ENCODE measurements at regions of chr19 and their contacts with region 1.

Region 1: GRCh38 chr19:43934985-43935708 is at the start of gene ZNF45:
- DNase-seq: peak; percentile 91
- H3K4me3 Mint-ChIP-seq: peak within 1 kb of the TSS; percentile 92
- H3K27ac Mint-ChIP-seq: peak within 1 kb of the TSS; percentile 89
- H3K4me1 Mint-ChIP-seq: peaks cover 24% of the 10 kb centered on the region
- H3K27me3 Mint-ChIP-seq: no peaks in the 10 kb centered on the region
- total RNA-seq, gene ZNF45: 5.4 to 6.3 TPM

Region 2: GRCh38 chr19:43820098-43820883 is 114.9 kb before region 1 on chr19:
- CTCF ChIA-PET with region 1: no interaction called
- intact Hi-C with region 1: no loop called
- DNase-seq: peak; percentile 77
- H3K4me3 Mint-ChIP-seq: peak overlapping the region; percentile 78
- H3K27ac Mint-ChIP-seq: peak overlapping the region; percentile 61
- H3K4me1 Mint-ChIP-seq: peaks cover 13% of the 10 kb centered on the region
- H3K27me3 Mint-ChIP-seq: peaks cover 17% of the 10 kb centered on the region

Region 3: GRCh38 chr19:43901395-43902390 is 33.5 kb before region 1 on chr19:
- CTCF ChIA-PET with region 1: no interaction called
- intact Hi-C with region 1: loop called (anchors 1 kb)
- DNase-seq: peak; percentile 75
- H3K4me3 Mint-ChIP-seq: peak overlapping the region; percentile 86
- H3K27ac Mint-ChIP-seq: peak overlapping the region; percentile 68
- H3K4me1 Mint-ChIP-seq: peaks cover 17% of the 10 kb centered on the region
- H3K27me3 Mint-ChIP-seq: no peaks in the 10 kb centered on the region

Region 4: DNA sequence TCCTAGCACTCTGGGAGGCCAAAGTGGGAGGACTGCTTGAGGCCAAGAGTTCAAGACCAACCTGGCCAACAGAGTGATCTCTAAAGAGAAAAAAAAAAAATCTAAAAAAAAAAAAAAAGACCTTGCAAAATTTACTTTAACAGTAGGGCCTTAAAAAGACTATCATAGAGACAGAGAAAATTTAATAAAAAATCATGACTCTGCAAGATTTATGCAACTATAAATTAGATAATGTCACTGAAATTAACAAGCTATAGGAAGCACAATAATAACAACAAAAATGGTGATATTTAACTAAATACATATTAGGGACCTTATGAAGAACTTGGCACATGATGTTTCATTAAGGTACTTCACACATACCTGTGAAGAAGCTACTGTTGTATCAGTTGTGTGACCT is 11.3 kb before region 1 on chr19:
- CTCF ChIA-PET with region 1: no interaction called
- intact Hi-C with region 1: no loop called
- DNase-seq: no peak
- H3K4me3 Mint-ChIP-seq: no peak overlapping the region
- H3K27ac Mint-ChIP-seq: no peak overlapping the region
- H3K4me1 Mint-ChIP-seq: no peaks in the 10 kb centered on the region
- H3K27me3 Mint-ChIP-seq: no peaks in the 10 kb centered on the region

Region 5: DNA sequence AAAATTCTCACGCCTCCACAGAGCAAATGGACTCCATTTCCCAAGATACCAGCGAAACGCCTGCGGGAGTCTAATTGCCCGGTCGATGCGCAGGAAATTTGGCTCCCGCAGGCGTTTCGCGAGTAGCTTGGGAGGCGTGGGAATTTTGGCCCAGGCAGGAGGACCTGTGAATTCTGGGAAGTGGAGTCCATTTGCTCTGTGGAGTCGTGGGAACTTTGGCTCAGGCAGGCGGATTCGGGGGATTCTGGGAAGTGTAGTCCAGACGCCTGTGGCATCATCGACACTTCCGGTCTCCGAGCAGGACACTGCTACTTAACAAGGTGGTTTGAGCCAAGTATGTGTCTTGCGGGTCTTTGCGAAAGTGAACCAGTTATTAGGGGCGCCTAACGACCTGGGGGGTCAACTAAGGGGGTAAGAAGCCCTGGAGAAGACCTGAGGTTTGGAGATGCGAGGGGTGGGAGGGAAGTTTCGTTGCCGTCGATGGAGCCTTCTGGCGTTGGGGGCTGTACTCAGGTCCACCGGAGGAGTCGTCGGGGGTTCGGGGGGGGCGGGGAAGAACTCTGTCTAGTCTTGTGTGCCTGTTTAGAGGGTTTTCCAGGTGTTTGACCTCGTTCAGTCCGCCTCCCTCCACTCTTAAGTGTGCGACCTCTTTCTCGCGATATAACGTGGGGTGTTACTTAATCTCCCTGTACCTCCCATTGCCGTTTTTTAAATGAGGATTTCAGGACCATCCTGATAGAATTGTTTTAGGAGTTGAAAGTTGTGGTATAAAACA is 49.0 kb after region 1 on chr19 and contains the start of gene ZNF155:
- CTCF ChIA-PET with region 1: no interaction called
- intact Hi-C with region 1: loop called (anchors 1 kb)
- DNase-seq: peak; percentile 83
- H3K4me3 Mint-ChIP-seq: peak within 1 kb of the TSS; percentile 98
- H3K27ac Mint-ChIP-seq: peak within 1 kb of the TSS; percentile 91
- H3K4me1 Mint-ChIP-seq: peaks cover 8% of the 10 kb centered on the region
- H3K27me3 Mint-ChIP-seq: no peaks in the 10 kb centered on the region
- total RNA-seq, gene ZNF155: 2.9 to 3.1 TPM

Region 6: GRCh38 chr19:44010468-44010867 is 75.3 kb after region 1 on chr19:
- CTCF ChIA-PET with region 1: no interaction called
- intact Hi-C with region 1: no loop called
- DNase-seq: no peak
- H3K4me3 Mint-ChIP-seq: no peak overlapping the region
- H3K27ac Mint-ChIP-seq: no peak overlapping the region
- H3K4me1 Mint-ChIP-seq: no peaks in the 10 kb centered on the region
- H3K27me3 Mint-ChIP-seq: no peaks in the 10 kb centered on the region

Region 7: DNA sequence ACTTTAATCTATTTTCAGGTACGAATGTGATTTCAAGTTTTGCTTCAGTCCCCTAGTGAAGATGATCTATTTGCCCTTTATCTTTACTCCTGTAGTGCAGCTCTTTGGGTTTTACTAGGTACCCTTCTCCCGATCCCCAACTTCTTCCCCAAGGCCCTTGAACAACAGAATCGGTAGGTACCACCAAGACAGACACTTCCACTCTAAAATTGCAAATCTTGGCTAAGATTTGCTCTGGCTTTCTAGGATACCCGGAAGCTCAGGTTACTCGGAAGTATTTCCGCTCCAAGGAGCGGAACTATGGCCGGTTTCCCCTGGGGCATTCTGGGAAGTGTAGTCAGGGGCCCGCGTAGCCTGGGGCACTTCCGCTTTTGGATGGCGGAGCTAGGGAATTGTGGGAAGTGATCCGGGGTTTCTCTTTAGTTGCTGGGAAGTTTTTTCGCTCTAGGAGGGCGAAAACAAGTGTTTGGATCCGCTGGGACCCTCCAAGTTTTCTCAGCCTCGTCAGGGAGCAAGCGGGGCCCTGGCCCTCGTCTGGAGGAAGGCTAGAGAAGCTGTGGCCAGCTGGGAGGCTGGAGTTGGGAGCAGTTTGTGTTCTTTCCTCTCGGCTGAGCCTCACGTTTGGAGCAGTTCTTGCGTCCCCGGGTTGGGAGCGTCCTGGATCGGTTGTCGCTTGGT is 272.1 kb after region 1 on chr19:
- CTCF ChIA-PET with region 1: no interaction called
- intact Hi-C with region 1: loop called (anchors 1 kb)
- DNase-seq: peak; percentile 87
- H3K4me3 Mint-ChIP-seq: peak overlapping the region; percentile 80
- H3K27ac Mint-ChIP-seq: peak overlapping the region; percentile 63
- H3K4me1 Mint-ChIP-seq: peaks cover 5% of the 10 kb centered on the region
- H3K27me3 Mint-ChIP-seq: peaks cover 3% of the 10 kb centered on the region